ENCODE measurements at regions of chr2 and their contacts with region 1.

Region 1: DNA sequence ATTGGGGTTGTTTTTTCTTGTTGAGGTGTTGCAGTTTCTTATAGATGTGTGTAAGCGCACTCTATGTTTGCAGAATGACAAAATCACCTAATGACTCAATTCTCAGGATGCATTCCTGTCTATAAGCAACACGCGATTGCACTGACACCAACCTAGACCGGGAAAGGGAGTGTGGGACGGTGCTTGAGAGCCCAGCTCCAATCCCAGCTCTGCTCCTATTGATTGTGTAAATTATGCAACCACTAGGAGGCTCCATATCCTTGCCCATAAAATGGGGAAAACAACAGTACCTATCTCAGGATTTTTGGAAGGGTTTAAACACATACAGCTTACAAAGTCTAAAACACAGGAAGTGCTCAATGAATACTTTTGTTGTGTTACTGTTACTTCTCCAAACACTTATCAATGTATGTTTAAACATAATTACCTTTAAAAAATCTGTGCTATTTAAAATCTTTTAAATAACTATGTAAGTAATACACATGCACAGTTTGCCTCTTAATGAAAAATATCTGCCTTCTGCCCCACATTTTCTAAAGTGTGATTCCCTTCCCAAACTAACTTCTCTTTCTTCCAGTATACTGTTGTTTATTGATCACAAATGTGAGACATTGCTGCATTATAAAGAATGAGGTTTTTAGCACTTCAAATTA is 132.5 kb downstream of the SPHKAP start:
- DNase-seq: peak; percentile 4
- H3K4me3 Mint-ChIP-seq: no peak overlapping the region
- H3K27ac Mint-ChIP-seq: no peak overlapping the region
- H3K4me1 Mint-ChIP-seq: no peaks in the 10 kb centered on the region
- H3K27me3 Mint-ChIP-seq: no peaks in the 10 kb centered on the region

Region 2: DNA sequence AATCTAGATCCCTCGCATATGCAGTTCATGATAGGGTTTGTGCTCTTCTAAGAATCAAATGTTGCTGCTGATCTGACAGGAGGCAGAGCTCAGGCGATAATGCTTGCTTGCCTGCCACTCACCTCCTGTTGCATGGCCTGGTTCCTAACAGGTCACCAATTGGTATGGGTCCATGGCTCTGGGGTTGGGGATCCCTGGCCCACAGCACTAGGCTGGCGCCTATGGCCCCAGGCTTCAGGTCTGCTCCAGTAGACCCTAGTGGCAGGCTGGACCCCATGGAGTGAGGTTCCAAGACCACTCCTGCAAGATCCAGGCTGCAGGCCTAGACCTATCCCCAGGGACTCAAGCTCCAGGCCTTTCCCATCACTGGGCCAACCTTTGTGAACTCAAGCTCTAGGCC is 30.2 kb after region 1 on chr2:
- CTCF ChIA-PET with region 1: no interaction called
- intact Hi-C with region 1: no loop called
- DNase-seq: no peak
- H3K4me3 Mint-ChIP-seq: no peak overlapping the region
- H3K27ac Mint-ChIP-seq: no peak overlapping the region
- H3K4me1 Mint-ChIP-seq: no peaks in the 10 kb centered on the region
- H3K27me3 Mint-ChIP-seq: no peaks in the 10 kb centered on the region

Region 3: GRCh38 chr2:228657807-228658402 is 608.9 kb after region 1 on chr2:
- CTCF ChIA-PET with region 1: no interaction called
- intact Hi-C with region 1: loop called (anchors 5 kb)
- DNase-seq: no peak
- H3K4me3 Mint-ChIP-seq: no peak overlapping the region
- H3K27ac Mint-ChIP-seq: no peak overlapping the region
- H3K4me1 Mint-ChIP-seq: no peaks in the 10 kb centered on the region
- H3K27me3 Mint-ChIP-seq: no peaks in the 10 kb centered on the region

Region 4: GRCh38 chr2:229273723-229274338 is 1224.9 kb after region 1 on chr2:
- CTCF ChIA-PET with region 1: no interaction called
- intact Hi-C with region 1: loop called (anchors 5 kb)
- DNase-seq: no peak
- H3K4me3 Mint-ChIP-seq: no peak overlapping the region
- H3K27ac Mint-ChIP-seq: no peak overlapping the region
- H3K4me1 Mint-ChIP-seq: peaks cover 2% of the 10 kb centered on the region
- H3K27me3 Mint-ChIP-seq: peaks cover 25% of the 10 kb centered on the region

Region 5: DNA sequence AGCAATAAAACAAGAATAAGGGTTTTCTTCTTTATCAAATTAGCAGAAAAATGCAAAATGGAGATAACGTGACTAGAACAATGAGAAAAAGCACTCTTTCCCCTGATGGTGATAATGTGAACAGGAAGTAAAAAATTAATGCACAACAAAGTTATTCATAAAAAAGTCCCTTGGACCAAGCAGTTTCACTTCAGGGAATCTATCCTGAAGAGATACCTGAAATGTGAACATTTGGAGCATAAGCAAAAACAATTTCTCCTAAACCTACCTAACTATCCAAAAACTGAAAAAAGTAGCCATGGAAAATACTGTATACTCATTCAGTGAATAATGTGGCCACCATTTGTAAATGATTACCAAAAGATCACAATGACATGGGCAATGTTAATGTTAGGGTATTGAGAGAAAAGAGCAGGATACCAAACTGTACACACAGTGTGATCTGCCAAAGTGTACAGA is 1824.2 kb after region 1 on chr2:
- CTCF ChIA-PET with region 1: no interaction called
- intact Hi-C with region 1: no loop called
- DNase-seq: no peak
- H3K4me3 Mint-ChIP-seq: no peak overlapping the region
- H3K27ac Mint-ChIP-seq: peak overlapping the region; percentile 21
- H3K4me1 Mint-ChIP-seq: peaks cover 49% of the 10 kb centered on the region
- H3K27me3 Mint-ChIP-seq: no peaks in the 10 kb centered on the region

Measured in activated naive CD4-positive, alpha-beta T cell treated with anti-CD3 and anti-CD28 coated beads for 36 hours (primary cell).